Activated B cell treated with CpG ODN at 0.5 μM for 24 hours (primary cell): ENCODE measurements at regions of chr9 and their contacts with region 1.

Region 1: GRCh38 chr9:136225748-136226679 is 19.6 kb downstream of the QSOX2 start:
- DNase-seq: peak; percentile 70
- ATAC-seq: peak; percentile 78
- H3K4me3 Mint-ChIP-seq: peak overlapping the region; percentile 79
- H3K27ac Mint-ChIP-seq: peak overlapping the region; percentile 98
- H3K4me1 Mint-ChIP-seq: peaks cover 80% of the 10 kb centered on the region
- H3K27me3 Mint-ChIP-seq: no peaks in the 10 kb centered on the region
- CTCF ChIP-seq: peak; percentile 30

Region 2: DNA sequence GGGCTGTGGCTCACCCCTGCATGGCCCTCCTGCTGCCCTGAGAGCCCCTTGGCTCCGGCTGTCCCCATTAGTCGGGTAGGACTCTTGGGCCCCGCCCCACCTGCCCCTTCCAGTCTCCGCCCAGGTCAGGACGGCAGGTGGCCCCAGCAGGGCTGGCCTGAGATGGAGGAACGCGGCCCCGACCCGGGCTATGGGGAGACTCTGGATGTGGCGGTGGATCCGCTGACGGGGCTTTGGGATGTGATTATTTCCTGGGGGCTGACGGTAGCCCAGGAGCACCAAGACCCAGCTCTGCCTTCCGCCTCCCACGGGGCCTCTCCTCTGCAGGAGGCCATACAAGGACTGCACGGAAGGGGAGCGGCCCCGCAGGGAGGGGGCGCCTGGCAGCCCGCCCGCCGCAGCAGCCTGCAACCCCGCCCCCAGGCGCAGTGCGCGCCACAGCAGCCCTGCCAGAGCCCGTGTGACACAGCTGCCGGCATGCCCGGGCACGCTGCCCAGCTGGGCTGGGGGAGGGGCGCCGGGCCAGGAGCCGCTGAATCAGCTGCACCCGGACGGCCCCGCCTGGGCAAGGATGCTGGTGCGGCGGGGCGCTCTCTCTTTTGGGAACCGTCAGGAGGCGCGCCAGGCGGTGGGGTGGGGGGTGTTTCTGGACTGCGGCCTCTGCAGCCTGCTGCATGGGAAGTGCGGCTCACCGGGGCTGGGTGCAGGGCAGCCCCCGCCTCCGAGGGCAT is 116.5 kb before region 1 on chr9:
- CTCF ChIA-PET with region 1: no interaction called
- POLR2A ChIA-PET with region 1: no interaction called
- intact Hi-C with region 1: no loop called
- DNase-seq: peak; percentile 73
- ATAC-seq: peak; percentile 92
- H3K4me3 Mint-ChIP-seq: peak overlapping the region; percentile 77
- H3K27ac Mint-ChIP-seq: no peak overlapping the region
- H3K4me1 Mint-ChIP-seq: peaks cover 36% of the 10 kb centered on the region
- H3K27me3 Mint-ChIP-seq: peaks cover 3% of the 10 kb centered on the region
- CTCF ChIP-seq: no peak

Region 3: DNA sequence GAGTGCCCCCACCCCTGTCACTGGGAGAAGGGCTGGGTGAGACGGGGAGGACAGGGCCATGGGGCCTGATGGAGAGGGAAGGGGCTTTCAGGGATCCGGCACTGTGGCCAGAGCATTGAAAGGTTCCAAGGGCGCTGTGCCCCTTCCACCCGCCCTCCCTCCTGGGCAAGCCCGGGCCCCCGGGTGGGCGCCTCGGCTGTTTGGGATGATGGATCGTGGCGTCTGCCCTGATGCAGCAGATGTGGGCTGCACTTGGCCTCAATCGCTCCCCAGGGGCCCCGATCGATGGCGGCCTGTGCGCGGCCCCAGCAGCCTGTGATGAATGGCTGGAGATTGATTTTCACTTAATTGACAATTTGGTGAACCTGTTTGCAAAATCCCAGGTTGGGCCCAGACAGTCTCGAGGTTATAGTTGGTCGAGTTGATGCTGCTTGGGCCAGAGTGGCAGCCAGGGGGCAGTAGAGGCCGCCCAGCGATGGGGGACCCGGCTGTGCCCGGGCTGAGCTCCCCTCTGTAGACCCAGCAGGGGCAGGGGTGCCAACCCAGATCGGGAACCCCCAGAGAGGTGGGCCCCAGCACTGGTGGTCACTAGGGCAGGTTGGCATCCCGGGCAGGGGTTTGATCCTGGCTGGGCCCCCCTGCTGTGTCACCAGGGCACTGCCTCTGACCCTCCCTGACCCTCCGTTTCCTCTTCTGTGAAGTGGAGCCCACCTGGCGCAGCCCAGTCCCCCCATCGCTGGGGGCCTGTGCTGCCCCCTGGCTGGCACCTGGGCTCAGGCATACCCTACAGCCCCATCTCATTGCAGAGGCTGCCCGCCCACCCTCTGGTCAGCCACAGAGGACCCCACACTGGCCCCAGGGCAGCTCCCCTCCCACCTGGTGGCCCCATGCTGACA is 55.8 kb before region 1 on chr9:
- CTCF ChIA-PET with region 1: interaction called, 3 read pairs
- POLR2A ChIA-PET with region 1: no interaction called
- intact Hi-C with region 1: loop called (anchors 1 kb)
- DNase-seq: peak; percentile 70
- ATAC-seq: peak; percentile 99
- H3K4me3 Mint-ChIP-seq: no peak overlapping the region
- H3K27ac Mint-ChIP-seq: no peak overlapping the region
- H3K4me1 Mint-ChIP-seq: peaks cover 6% of the 10 kb centered on the region
- H3K27me3 Mint-ChIP-seq: peaks cover 16% of the 10 kb centered on the region
- CTCF ChIP-seq: peak; percentile 33

Region 4: GRCh38 chr9:136239981-136240330 is 13.9 kb after region 1 on chr9:
- CTCF ChIA-PET with region 1: interaction called, 39 read pairs
- POLR2A ChIA-PET with region 1: interaction called, 60 read pairs
- intact Hi-C with region 1: loop called (anchors 1 kb)
- DNase-seq: peak; percentile 64
- ATAC-seq: peak; percentile 78
- H3K4me3 Mint-ChIP-seq: peak overlapping the region; percentile 76
- H3K27ac Mint-ChIP-seq: peak overlapping the region; percentile 79
- H3K4me1 Mint-ChIP-seq: peaks cover 90% of the 10 kb centered on the region
- H3K27me3 Mint-ChIP-seq: no peaks in the 10 kb centered on the region
- CTCF ChIP-seq: no peak

Region 5: DNA sequence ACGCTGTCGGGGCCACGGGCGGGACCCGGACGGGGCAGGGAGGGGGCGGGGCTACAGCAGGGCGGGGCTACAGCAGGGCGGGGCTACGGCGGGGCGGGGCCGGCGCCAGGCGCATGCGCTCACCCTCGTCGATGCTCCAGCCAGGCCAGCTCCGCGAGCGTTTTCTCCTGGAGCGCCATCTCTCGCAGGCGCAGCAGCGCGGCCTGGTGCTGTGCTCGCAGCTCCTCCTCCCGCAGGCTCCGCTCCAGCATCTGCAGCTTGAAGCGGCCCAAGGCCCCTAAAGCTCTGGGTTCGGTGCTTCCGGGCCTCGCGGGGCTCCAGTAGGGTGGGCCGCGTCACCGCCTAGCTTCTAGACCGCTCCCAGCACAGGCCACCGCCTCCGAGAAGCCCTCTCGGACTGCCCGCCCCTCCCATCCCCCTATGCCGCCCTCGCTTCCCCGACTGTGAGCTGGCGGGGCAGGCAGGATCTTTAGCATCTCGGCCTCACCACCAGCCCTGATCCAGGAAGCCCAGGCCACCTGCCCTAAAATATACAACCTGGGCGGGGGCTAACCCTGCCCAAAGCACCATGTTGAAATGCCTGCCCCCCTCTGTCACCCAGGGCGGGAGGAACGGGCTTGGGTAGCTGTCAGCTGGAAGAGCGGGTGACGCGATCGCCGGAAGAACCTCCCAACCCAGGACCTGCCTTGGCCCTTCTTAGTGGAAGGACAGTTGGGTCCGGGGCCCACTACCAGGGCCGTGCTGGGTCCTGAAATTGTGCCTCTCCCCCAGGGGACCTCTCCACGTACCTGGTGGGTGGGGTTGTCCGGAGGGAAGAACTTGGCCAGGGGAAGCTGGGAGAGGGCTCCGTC is 41.5 kb after region 1 on chr9:
- CTCF ChIA-PET with region 1: interaction called, 3 read pairs
- POLR2A ChIA-PET with region 1: interaction called, 8 read pairs
- intact Hi-C with region 1: loop called (anchors 1 kb)
- DNase-seq: peak; percentile 72
- ATAC-seq: peak; percentile 97
- H3K4me3 Mint-ChIP-seq: peak overlapping the region; percentile 80
- H3K27ac Mint-ChIP-seq: peak overlapping the region; percentile 70
- H3K4me1 Mint-ChIP-seq: peaks cover 11% of the 10 kb centered on the region
- H3K27me3 Mint-ChIP-seq: no peaks in the 10 kb centered on the region
- CTCF ChIP-seq: no peak

Region 6: DNA sequence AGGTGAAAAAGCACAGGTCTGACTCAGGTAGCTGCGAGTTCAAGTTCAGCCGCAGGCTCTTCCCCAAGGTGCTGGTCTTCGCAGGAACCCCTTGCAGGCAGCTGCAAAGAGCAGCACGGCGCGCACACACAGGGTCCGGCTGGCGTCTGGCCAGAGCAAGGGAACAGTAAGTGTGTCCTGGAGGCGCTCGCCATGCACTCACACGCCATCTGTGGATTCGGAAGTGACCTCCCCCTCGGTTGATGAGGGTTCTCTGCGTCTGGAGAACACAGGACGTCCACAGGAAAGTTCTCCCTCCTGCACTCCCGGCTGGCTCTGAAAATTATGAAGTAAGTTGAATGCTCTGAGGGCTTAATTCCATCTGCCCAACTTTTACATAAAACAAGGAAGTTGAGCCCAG is 422.7 kb after region 1 on chr9:
- CTCF ChIA-PET with region 1: no interaction called
- POLR2A ChIA-PET with region 1: no interaction called
- intact Hi-C with region 1: no loop called
- DNase-seq: no peak
- ATAC-seq: no peak
- H3K4me3 Mint-ChIP-seq: no peak overlapping the region
- H3K27ac Mint-ChIP-seq: no peak overlapping the region
- H3K4me1 Mint-ChIP-seq: peaks cover 26% of the 10 kb centered on the region
- H3K27me3 Mint-ChIP-seq: peaks cover 17% of the 10 kb centered on the region
- CTCF ChIP-seq: no peak